Testis (tissue), 5 donors: ENCODE measurements at regions of chr19 and their contacts with region 1.

Region 1: GRCh38 chr19:9621156-9622037 is at the start of gene ZNF561:
- DNase-seq: peak; percentile 88
- H3K4me3 ChIP-seq: peak within 1 kb of the TSS; percentile 69 to 97
- H3K27ac ChIP-seq: peak within 1 kb of the TSS; percentile 90 to 94
- H3K4me1 ChIP-seq: peaks cover 16% of the 10 kb centered on the region
- H3K27me3 ChIP-seq: no peaks in the 10 kb centered on the region
- CTCF ChIP-seq: no peak
- POLR2A ChIP-seq: no peak
- total RNA-seq, gene ZNF561: 19.3 to 37.7 TPM

Region 2: DNA sequence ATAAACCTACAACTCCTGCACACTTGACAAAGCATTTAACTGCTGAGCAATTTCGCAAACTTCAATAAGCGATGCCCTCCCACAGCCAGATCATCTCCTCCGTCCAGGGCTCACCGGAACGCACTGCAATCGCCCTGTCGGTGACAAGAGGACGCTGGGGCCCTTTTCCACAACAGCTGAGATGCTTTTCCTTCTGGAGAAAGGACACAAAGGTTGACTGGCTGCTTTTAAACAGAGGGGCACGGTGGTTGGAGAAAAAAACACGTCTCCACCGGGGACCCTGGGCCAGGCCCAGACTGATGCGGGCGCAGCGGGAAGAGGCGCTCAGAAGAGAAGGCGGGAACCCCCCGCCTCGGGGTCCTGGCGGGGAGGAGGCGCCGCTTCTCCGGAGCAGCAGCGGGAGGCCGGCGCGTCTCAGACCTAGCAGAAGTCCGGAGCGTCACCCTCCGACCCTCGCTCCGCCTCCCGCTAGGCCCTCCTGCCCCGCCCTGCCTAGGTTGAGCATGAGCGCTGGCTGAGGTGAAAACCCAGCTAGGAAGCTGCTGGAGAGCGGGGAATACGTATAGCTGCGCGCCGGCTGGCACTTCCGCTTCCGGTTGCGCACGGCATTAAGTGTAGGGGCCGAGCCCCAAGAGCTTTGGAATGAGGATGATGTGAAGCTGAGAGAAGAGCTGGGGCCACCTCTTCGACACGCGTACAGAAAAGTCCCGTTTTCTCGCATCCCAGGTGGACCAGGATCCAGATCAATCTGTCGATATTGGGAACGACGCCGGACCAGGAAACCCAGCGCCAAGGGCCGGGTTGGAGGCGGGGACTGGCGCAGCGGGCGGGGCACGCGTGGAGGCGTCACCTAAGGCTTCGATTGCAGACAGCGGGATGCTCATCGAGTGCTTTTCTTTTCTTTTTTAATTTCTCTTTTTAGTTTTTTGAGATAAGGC is 147.0 kb after region 1 on chr19 and contains the start of gene ZNF846:
- intact Hi-C with region 1: loop called (anchors 10 kb)
- DNase-seq: peak; percentile 95
- H3K4me3 ChIP-seq: peak within 1 kb of the TSS; percentile 67 to 71
- H3K27ac ChIP-seq: peak within 1 kb of the TSS; percentile 79 to 89
- H3K4me1 ChIP-seq: no peaks in the 10 kb centered on the region
- H3K27me3 ChIP-seq: no peaks in the 10 kb centered on the region
- CTCF ChIP-seq: peak in 1 of 3 experiments; percentile 7
- POLR2A ChIP-seq: no peak
- total RNA-seq, gene ZNF846: 48.1 to 50.5 TPM